Activated CD4-positive, alpha-beta T cell treated with anti-CD3 and anti-CD28 coated beads for 36 hours (primary cell): ENCODE measurements at regions of chr16 and their contacts with region 1.

Region 1: DNA sequence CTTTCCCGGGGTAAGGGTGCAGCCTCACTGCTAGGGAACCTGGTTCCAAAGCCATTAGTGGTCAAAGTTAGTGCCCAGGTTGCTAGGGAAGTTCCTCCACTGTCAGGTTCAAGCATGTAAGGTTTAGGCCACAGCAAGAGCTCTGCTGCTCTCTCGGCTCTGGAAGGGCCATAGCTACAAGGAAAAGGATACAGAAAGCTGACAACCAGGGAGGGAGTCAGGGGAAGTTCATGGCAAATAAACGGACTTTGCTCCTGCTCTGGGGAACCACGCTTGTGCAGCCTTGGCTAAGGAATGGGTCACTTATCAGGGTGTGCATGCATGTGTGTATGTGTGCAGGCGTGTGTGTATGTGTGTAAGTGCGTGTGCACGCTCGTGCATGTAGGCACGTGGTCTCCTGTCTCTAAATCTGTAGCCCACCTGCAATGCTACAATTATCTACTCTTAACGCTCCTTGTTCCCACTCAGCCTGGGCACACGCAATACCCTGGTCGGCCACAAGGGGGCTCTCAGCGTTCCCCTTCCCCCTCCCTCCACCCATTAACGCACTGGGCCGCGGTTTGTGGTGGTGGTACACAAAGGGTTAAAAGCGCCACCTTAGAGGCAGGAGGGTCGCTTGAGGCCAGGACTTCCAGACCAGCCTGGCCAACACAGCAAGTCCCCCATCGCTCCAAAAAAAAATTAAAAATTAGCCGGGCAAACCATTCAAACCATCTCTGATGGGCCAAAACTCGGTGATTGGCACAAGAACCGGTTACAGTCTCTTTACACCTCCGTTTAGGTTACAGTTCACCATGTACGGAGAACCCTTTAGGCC is 48.4 kb upstream of the KDM8 start:
- DNase-seq: peak; percentile 86
- ATAC-seq: peak; percentile 87
- H3K4me3 Mint-ChIP-seq: no peak overlapping the region
- H3K27ac Mint-ChIP-seq: no peak overlapping the region
- H3K4me1 Mint-ChIP-seq: peaks cover 9% of the 10 kb centered on the region
- H3K27me3 Mint-ChIP-seq: no peaks in the 10 kb centered on the region

Region 2: DNA sequence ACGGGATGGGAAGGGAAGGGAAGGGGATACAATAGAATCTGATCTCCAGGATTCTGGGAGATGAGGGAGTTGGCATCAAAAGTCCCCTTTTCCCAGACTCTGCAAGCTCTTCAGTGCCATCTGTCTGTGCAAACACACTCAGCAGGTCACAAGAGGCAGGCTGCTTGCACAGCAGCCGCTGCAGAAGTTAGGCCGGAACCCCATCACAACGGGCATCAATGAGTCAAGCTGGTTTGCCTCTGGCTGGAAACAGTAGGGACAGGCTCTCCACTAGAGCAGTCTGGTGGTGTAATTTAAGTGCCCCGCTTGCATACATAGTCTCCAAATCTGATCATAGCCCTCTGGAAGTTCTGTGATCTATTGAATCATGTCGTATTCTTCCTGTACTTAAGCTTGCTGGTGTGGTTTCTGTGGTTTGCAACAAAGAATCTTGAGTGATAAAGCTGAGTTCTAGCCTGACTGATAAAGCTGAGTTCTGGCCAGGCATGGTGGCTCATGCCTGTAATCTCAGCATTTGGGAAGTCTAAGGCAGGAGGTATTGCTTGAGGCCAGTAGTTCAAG is 14.7 kb after region 1 on chr16:
- CTCF ChIA-PET with region 1: interaction called, 22 read pairs
- POLR2A ChIA-PET with region 1: interaction called, 3 read pairs
- intact Hi-C with region 1: loop called in 1 of 2 experiments (anchors 1 kb)
- DNase-seq: peak; percentile 86
- ATAC-seq: peak; percentile 92
- H3K4me3 Mint-ChIP-seq: peak overlapping the region; percentile 3
- H3K27ac Mint-ChIP-seq: peak overlapping the region; percentile 74
- H3K4me1 Mint-ChIP-seq: peaks cover 68% of the 10 kb centered on the region
- H3K27me3 Mint-ChIP-seq: no peaks in the 10 kb centered on the region

Region 3: DNA sequence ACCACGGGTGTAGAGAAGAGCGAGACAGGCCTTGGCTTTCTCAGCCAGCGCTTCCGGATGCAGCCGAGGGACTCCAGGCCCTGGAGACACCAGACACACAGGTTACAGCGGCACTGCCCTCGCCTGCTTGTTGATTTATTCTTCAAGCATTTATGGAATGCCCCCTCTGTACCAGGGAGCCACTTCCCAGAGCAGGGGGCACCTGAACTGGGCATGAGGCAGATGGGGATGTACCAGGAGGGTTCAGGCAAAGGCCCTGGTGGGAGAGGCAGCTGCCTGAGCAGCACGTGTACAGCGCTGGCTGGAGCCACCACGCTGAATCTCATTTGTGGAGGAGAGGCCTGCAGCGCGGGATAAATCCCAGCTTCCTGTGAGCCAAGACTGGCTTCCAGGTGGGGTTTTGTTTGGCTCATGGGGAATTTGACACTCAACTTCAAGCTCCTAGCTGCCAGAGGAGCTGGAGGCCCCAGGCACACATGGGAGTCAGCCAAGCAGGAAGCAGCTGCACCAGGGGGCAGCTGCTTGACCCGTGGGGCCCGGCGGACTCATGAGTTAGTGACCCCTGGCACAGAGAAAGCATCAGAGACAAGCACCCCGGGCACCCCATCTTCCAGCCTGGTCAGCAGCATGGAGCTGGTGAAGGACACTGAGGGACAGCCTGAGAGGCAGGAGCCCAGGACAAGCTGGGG is 306.7 kb after region 1 on chr16:
- CTCF ChIA-PET with region 1: interaction called, 4 read pairs
- POLR2A ChIA-PET with region 1: no interaction called
- intact Hi-C with region 1: loop called (anchors 1 kb)
- DNase-seq: no peak
- ATAC-seq: no peak
- H3K4me3 Mint-ChIP-seq: no peak overlapping the region
- H3K27ac Mint-ChIP-seq: no peak overlapping the region
- H3K4me1 Mint-ChIP-seq: peaks cover 21% of the 10 kb centered on the region
- H3K27me3 Mint-ChIP-seq: no peaks in the 10 kb centered on the region